ENCODE measurements at regions of chr13 and their contacts with region 1.

Region 1: GRCh38 chr13:91347202-91347995 is at the start of gene MIR17HG:
- DNase-seq: peak; percentile 98

Region 2: GRCh38 chr13:90375851-90376250 is 971.5 kb before region 1 on chr13:
- CTCF ChIA-PET with region 1: no interaction called
- POLR2A ChIA-PET with region 1: no interaction called
- DNase-seq: no peak

Region 3: GRCh38 chr13:91326146-91326545 is 21.3 kb before region 1 on chr13:
- CTCF ChIA-PET with region 1: no interaction called
- POLR2A ChIA-PET with region 1: interaction called, 10 read pairs
- DNase-seq: no peak

Region 4: DNA sequence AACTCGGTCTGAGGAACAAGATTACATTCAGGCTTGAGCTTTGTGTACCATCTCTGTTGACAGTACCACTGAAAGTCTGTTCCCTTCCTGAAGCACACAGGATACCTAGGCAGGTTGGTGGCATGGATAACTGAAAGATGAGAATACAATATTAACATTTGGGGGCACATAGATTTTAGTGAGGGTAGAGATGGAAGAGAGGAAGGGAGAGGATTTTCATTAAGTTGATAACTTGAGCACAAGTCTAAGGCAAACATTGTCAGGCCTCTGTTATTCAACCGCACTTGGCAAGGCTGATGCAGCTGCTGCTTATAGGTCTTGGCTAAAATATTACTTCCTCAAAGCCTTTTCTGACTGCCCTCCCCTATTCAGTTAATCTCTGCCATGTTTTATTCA is 11.0 kb after region 1 on chr13:
- CTCF ChIA-PET with region 1: no interaction called
- POLR2A ChIA-PET with region 1: interaction called, 20 read pairs
- DNase-seq: no peak

Region 5: GRCh38 chr13:91398413-91399272 is 51.2 kb after region 1 on chr13 and contains the start of gene GPC5:
- CTCF ChIA-PET with region 1: no interaction called
- POLR2A ChIA-PET with region 1: no interaction called
- DNase-seq: peak; percentile 100